GM12878 (cell line): ENCODE measurements at regions of chr9 and their contacts with region 1.

Region 1: GRCh38 chr9:1009101-1009707 is 32.7 kb downstream of the DMRT3 start:
- DNase-seq: no peak
- ATAC-seq: peak; percentile 98
- H3K4me3 ChIP-seq: no peak overlapping the region
- H3K27ac ChIP-seq: no peak overlapping the region
- H3K4me1 ChIP-seq: peaks cover 7% of the 10 kb centered on the region
- H3K27me3 ChIP-seq: no peaks in the 10 kb centered on the region
- CTCF ChIP-seq: peak; percentile 98
- EP300 ChIP-seq: no peak
- POLR2A ChIP-seq: no peak
- RAD21 ChIP-seq: peak; percentile 96

Region 2: DNA sequence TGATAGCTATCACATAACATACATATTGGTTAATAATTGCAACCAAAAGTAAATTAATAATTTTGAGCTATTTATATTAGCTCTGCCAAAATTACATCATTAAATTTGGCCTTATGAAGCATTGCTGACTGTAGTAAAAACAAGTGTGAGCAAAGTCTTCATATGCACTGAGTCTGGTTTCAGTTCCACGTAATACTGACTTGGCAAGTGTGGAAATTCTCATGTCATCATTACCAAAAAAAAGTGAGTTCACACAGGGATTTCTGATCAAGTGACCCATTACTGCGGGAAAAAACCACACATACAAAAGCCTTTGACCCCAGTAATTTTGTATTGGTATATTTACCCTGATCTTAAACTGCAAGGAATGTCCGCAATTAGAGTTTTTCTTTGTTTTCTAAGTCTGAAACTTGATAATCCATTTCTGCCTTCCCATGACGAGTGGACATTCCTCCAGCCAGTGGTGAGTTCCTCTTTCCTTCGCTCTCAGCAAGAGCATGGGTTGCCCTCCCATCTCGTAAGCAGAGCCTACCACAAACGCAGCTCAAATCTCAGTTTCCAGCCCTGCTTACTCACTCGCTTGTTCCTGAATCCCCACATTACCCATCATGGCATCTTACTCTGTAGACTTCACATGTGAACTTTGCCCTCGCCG is 387.9 kb before region 1 on chr9:
- CTCF ChIA-PET with region 1: interaction called, 15 read pairs
- POLR2A ChIA-PET with region 1: no interaction called
- RAD21 ChIA-PET with region 1: interaction called, 8 read pairs
- SMC1A ChIA-PET with region 1: interaction called, 13 read pairs
- in situ Hi-C with region 1: no loop called
- intact Hi-C with region 1: no loop called
- DNase-seq: no peak
- ATAC-seq: peak; percentile 54; the same call in 2 of the 3 replicates
- H3K4me3 ChIP-seq: no peak overlapping the region
- H3K27ac ChIP-seq: no peak overlapping the region
- H3K4me1 ChIP-seq: no peaks in the 10 kb centered on the region
- H3K27me3 ChIP-seq: no peaks in the 10 kb centered on the region; a peak in 2 of 4 replicates
- CTCF ChIP-seq: no peak
- EP300 ChIP-seq: no peak
- POLR2A ChIP-seq: no peak
- RAD21 ChIP-seq: no peak

Region 3: GRCh38 chr9:882478-882877 is 126.7 kb before region 1 on chr9:
- CTCF ChIA-PET with region 1: interaction called, 16 read pairs
- POLR2A ChIA-PET with region 1: no interaction called
- RAD21 ChIA-PET with region 1: interaction called, 4 read pairs
- SMC1A ChIA-PET with region 1: interaction called, 8 read pairs
- in situ Hi-C with region 1: no loop called
- intact Hi-C with region 1: no loop called
- DNase-seq: no peak
- ATAC-seq: no peak
- H3K4me3 ChIP-seq: no peak overlapping the region
- H3K27ac ChIP-seq: no peak overlapping the region
- H3K4me1 ChIP-seq: no peaks in the 10 kb centered on the region
- H3K27me3 ChIP-seq: no peaks in the 10 kb centered on the region
- CTCF ChIP-seq: no peak
- EP300 ChIP-seq: no peak
- POLR2A ChIP-seq: no peak
- RAD21 ChIP-seq: no peak

Region 4: GRCh38 chr9:928362-929042 is 80.7 kb before region 1 on chr9:
- CTCF ChIA-PET with region 1: interaction called, 16 read pairs
- POLR2A ChIA-PET with region 1: no interaction called
- RAD21 ChIA-PET with region 1: interaction called, 4 read pairs
- SMC1A ChIA-PET with region 1: no interaction called
- in situ Hi-C with region 1: no loop called
- intact Hi-C with region 1: no loop called
- DNase-seq: no peak
- ATAC-seq: peak; percentile 86
- H3K4me3 ChIP-seq: no peak overlapping the region
- H3K27ac ChIP-seq: no peak overlapping the region
- H3K4me1 ChIP-seq: no peaks in the 10 kb centered on the region
- H3K27me3 ChIP-seq: no peaks in the 10 kb centered on the region; a peak in 1 of 4 replicates
- CTCF ChIP-seq: peak; percentile 25 to 64 (median 62); a peak in 5 of 6 replicates
- EP300 ChIP-seq: no peak
- POLR2A ChIP-seq: no peak
- RAD21 ChIP-seq: no peak

Region 5: GRCh38 chr9:1057910-1058309 is 48.7 kb after region 1 on chr9:
- CTCF ChIA-PET with region 1: interaction called, 11 read pairs
- POLR2A ChIA-PET with region 1: interaction called, 3 read pairs
- RAD21 ChIA-PET with region 1: interaction called, 3 read pairs
- SMC1A ChIA-PET with region 1: interaction called, 4 read pairs
- in situ Hi-C with region 1: no loop called
- intact Hi-C with region 1: no loop called
- DNase-seq: no peak
- ATAC-seq: peak; percentile 77
- H3K4me3 ChIP-seq: no peak overlapping the region
- H3K27ac ChIP-seq: no peak overlapping the region
- H3K4me1 ChIP-seq: no peaks in the 10 kb centered on the region
- H3K27me3 ChIP-seq: no peaks in the 10 kb centered on the region; a peak in 1 of 4 replicates
- CTCF ChIP-seq: no peak
- EP300 ChIP-seq: no peak
- POLR2A ChIP-seq: no peak
- RAD21 ChIP-seq: no peak

Region 6: DNA sequence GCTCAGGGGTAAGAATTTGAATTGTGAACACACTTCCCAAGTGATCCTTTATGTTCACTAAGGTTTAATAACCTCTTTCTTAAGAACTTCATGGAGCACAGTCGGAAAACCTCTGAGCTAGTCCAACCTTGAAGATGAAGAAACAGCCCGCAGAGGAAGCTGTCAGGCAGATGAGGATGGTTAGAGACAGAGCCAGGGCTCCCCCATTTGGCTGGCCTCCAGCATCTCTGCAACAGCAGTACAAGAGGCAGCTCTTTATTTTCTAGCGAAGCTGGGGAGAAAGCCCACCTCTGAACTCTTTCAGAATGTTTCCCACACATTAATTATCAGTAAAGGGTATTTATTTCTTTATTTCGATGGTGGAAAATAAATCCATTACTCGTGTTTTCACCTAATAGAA is 391.8 kb after region 1 on chr9:
- CTCF ChIA-PET with region 1: interaction called, 33 read pairs
- POLR2A ChIA-PET with region 1: no interaction called
- RAD21 ChIA-PET with region 1: interaction called, 20 read pairs
- SMC1A ChIA-PET with region 1: interaction called, 14 read pairs
- in situ Hi-C with region 1: no loop called
- intact Hi-C with region 1: no loop called
- DNase-seq: no peak
- ATAC-seq: peak; percentile 67
- H3K4me3 ChIP-seq: no peak overlapping the region
- H3K27ac ChIP-seq: no peak overlapping the region
- H3K4me1 ChIP-seq: no peaks in the 10 kb centered on the region
- H3K27me3 ChIP-seq: no peaks in the 10 kb centered on the region
- CTCF ChIP-seq: peak in 1 of 3 experiments; percentile 26; a peak in 2 of 6 replicates
- EP300 ChIP-seq: no peak
- POLR2A ChIP-seq: no peak
- RAD21 ChIP-seq: no peak

Region 7: GRCh38 chr9:1604942-1605560 is 595.8 kb after region 1 on chr9:
- CTCF ChIA-PET with region 1: interaction called, 35 read pairs
- POLR2A ChIA-PET with region 1: no interaction called
- RAD21 ChIA-PET with region 1: interaction called, 6 read pairs
- SMC1A ChIA-PET with region 1: interaction called, 3 read pairs
- in situ Hi-C with region 1: loop called (anchors 10 kb)
- intact Hi-C with region 1: no loop called
- DNase-seq: peak; percentile 11
- ATAC-seq: peak; percentile 98
- H3K4me3 ChIP-seq: no peak overlapping the region
- H3K27ac ChIP-seq: no peak overlapping the region
- H3K4me1 ChIP-seq: no peaks in the 10 kb centered on the region
- H3K27me3 ChIP-seq: no peaks in the 10 kb centered on the region
- CTCF ChIP-seq: peak; percentile 69 to 73 (median 71)
- EP300 ChIP-seq: no peak
- POLR2A ChIP-seq: no peak
- RAD21 ChIP-seq: peak; percentile 99

Region 8: GRCh38 chr9:2153630-2154217 is 1144.5 kb after region 1 on chr9:
- CTCF ChIA-PET with region 1: no interaction called
- POLR2A ChIA-PET with region 1: no interaction called
- RAD21 ChIA-PET with region 1: no interaction called
- SMC1A ChIA-PET with region 1: no interaction called
- in situ Hi-C with region 1: no loop called
- intact Hi-C with region 1: no loop called
- DNase-seq: no peak
- ATAC-seq: no peak
- H3K4me3 ChIP-seq: no peak overlapping the region
- H3K27ac ChIP-seq: no peak overlapping the region
- H3K4me1 ChIP-seq: peaks cover 12% of the 10 kb centered on the region
- H3K27me3 ChIP-seq: no peaks in the 10 kb centered on the region
- CTCF ChIP-seq: no peak
- EP300 ChIP-seq: no peak
- POLR2A ChIP-seq: no peak
- RAD21 ChIP-seq: no peak